ENCODE measurements at regions of chr7 and their contacts with region 1.

Region 1: DNA sequence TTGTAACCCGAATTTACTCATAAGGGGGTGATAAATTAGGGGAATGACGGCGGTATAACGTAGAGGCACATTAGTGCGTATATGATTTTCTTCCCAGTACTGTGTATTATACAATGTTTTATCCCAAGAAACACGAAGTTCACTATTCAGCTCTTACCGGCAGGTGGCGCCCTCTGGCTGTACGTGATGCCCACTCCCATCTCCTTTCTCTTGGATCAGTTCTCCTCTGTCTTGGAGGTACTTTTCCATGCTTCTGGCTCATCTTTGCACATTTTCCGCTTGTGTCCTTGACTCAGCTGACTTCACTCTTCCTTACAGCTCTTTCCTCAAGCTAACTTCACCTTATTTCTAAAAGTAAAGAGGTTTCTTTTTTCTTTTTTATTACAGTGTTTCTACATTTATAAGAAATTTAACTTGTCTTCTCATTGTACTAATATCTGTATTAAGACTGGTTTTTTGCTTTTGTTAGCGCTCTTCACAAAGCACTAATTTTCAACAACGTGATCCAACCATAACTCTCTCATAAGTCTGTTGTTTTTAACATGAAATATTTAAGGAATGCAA is 21.3 kb downstream of the TMEM176B start:
- DNase-seq: peak; percentile 59 to 85 (median 66)
- ATAC-seq: peak; percentile 71
- H3K4me3 ChIP-seq: no peak overlapping the region
- H3K4me3 Mint-ChIP-seq: no peak overlapping the region
- H3K27ac ChIP-seq: no peak overlapping the region
- H3K27ac Mint-ChIP-seq: no peak overlapping the region
- H3K4me1 ChIP-seq: peaks cover 6% of the 10 kb centered on the region
- H3K4me1 Mint-ChIP-seq: peaks cover 5% of the 10 kb centered on the region
- H3K27me3 ChIP-seq: peaks cover 0 to 3% of the 10 kb centered on the region in 2 experiments
- H3K27me3 Mint-ChIP-seq: peaks cover 4% of the 10 kb centered on the region
- CTCF ChIP-seq: peak; percentile 94

Region 2: GRCh38 chr7:150520145-150520544 is 258.7 kb before region 1 on chr7:
- CTCF ChIA-PET with region 1: no interaction called
- POLR2A ChIA-PET with region 1: no interaction called
- intact Hi-C with region 1: no loop called
- DNase-seq: peak in 9 of 14 experiments; percentile 23 to 59 (median 47)
- ATAC-seq: peak; percentile 33
- H3K4me3 ChIP-seq: peak overlapping the region; percentile 79
- H3K4me3 Mint-ChIP-seq: peak overlapping the region; percentile 100
- H3K27ac ChIP-seq: peak overlapping the region; percentile 59 to 60
- H3K27ac Mint-ChIP-seq: peak overlapping the region; percentile 93
- H3K4me1 ChIP-seq: peaks cover 12% of the 10 kb centered on the region
- H3K4me1 Mint-ChIP-seq: peaks cover 36% of the 10 kb centered on the region
- H3K27me3 ChIP-seq: no peaks in the 10 kb centered on the region
- H3K27me3 Mint-ChIP-seq: no peaks in the 10 kb centered on the region
- CTCF ChIP-seq: no peak

Region 3: GRCh38 chr7:150876817-150877526 is 98.2 kb after region 1 on chr7:
- CTCF ChIA-PET with region 1: no interaction called
- POLR2A ChIA-PET with region 1: no interaction called
- intact Hi-C with region 1: loop called in 1 of 2 experiments (anchors 5 kb)
- DNase-seq: peak; percentile 27 to 81 (median 42)
- ATAC-seq: peak; percentile 74
- H3K4me3 ChIP-seq: no peak overlapping the region
- H3K4me3 Mint-ChIP-seq: no peak overlapping the region
- H3K27ac ChIP-seq: no peak overlapping the region
- H3K27ac Mint-ChIP-seq: no peak overlapping the region
- H3K4me1 ChIP-seq: peaks cover 15% of the 10 kb centered on the region
- H3K4me1 Mint-ChIP-seq: peaks cover 24% of the 10 kb centered on the region
- H3K27me3 ChIP-seq: no peaks in the 10 kb centered on the region
- H3K27me3 Mint-ChIP-seq: peaks cover under 1% of the 10 kb centered on the region
- CTCF ChIP-seq: peak; percentile 42

Region 4: GRCh38 chr7:150898475-150899011 is 119.7 kb after region 1 on chr7:
- CTCF ChIA-PET with region 1: no interaction called
- POLR2A ChIA-PET with region 1: no interaction called
- intact Hi-C with region 1: no loop called
- DNase-seq: peak; percentile 58 to 87 (median 76)
- ATAC-seq: peak; percentile 87
- H3K4me3 ChIP-seq: no peak overlapping the region
- H3K4me3 Mint-ChIP-seq: no peak overlapping the region
- H3K27ac ChIP-seq: no peak overlapping the region
- H3K27ac Mint-ChIP-seq: no peak overlapping the region
- H3K4me1 ChIP-seq: peaks cover 13% of the 10 kb centered on the region
- H3K4me1 Mint-ChIP-seq: no peaks in the 10 kb centered on the region
- H3K27me3 ChIP-seq: peaks cover 25 to 32% of the 10 kb centered on the region in 2 experiments
- H3K27me3 Mint-ChIP-seq: peaks cover 67% of the 10 kb centered on the region
- CTCF ChIP-seq: peak; percentile 95